Upper lobe of right lung (tissue), 1 donor: ENCODE measurements at regions of chr1 and their contacts with region 1.

Region 1: DNA sequence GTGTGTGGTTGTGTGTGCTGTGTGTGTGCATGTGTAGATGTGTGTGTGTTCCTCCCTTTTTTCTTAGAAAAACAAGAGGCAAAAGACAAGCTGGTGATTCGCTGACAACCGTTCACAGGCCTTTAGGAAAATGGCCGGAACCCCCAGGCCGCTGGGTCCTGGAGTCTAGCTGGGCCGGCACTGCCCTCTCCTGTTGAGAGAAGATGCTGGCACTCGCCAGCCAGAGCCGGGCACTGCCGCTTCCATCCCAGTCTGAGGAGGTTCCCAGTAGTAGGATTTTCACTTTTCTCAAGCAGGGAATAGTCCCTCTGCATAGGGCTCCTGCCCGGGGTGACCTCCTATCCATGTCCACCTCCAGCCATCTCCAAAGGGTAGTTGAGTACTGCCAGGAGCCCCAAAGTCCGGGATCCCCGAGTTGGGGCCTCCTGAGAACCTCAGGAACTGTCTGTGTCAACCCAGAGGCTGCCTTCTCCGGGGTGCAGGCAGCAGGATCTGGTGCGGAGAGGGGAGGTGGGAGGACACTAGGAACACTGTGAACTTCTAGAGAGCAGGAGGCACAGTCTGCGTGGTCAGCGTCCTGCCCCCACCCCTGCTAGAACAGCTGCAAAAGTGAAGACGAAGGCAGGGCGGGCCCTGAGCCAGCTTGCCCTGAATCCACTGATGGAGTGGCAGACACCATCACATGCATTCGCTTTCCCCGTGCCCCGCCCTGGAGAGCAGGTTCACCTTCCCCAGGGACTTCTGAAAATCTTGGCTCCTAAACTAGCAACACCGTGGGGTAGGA is 44.1 kb upstream of the ARHGEF16 start:
- DNase-seq: no peak
- ATAC-seq: peak; percentile 15
- H3K4me3 ChIP-seq: no peak overlapping the region
- H3K27ac ChIP-seq: no peak overlapping the region
- H3K4me1 ChIP-seq: no peaks in the 10 kb centered on the region
- H3K27me3 ChIP-seq: no peaks in the 10 kb centered on the region
- CTCF ChIP-seq: peak; percentile 45

Region 2: DNA sequence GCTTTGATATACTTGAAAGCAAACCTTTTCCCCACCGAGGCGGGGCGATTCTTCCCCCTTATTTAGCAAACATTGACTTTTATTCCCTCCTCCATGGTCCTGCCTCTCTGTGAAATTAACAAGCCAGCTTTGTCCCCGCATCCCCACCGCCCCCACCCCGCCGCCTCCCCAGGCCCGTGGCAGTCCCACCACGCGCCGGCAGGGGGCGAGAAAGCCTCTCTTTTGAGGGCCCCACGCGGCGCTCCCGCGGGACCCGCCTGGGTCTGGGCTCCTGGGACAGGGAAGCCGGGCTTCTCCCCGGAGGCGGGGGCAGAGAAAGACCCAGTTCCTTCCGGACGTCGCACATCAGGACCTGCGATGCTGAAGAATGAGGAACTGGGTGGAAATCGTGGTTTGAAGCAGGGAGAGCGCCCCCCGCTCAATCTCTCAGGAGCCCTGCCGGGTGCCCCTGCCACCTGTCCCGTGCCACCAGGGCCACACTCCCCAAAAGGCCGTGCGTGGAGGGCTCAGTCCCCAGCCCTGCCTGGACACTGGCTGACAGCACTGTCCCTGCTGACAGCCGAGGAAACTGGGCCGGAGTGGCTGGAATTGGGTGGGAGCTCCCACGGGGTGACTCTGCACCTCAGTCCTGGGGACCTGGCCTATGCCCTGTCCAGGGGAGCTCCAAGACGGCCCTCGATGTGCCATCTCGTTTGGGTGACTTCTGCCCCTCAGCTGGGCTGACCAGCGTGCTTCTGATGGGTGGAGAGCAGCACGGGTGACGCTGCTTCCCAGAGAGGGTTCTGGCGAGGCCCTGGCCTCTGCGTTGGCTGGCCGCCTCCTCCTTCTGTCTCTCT is 397.7 kb before region 1 on chr1:
- intact Hi-C with region 1: loop called (anchors 5 kb)
- DNase-seq: peak; percentile 79
- ATAC-seq: peak; percentile 82
- H3K4me3 ChIP-seq: no peak overlapping the region
- H3K27ac ChIP-seq: no peak overlapping the region
- H3K4me1 ChIP-seq: no peaks in the 10 kb centered on the region
- H3K27me3 ChIP-seq: peaks cover 43% of the 10 kb centered on the region
- CTCF ChIP-seq: peak; percentile 80

Region 3: DNA sequence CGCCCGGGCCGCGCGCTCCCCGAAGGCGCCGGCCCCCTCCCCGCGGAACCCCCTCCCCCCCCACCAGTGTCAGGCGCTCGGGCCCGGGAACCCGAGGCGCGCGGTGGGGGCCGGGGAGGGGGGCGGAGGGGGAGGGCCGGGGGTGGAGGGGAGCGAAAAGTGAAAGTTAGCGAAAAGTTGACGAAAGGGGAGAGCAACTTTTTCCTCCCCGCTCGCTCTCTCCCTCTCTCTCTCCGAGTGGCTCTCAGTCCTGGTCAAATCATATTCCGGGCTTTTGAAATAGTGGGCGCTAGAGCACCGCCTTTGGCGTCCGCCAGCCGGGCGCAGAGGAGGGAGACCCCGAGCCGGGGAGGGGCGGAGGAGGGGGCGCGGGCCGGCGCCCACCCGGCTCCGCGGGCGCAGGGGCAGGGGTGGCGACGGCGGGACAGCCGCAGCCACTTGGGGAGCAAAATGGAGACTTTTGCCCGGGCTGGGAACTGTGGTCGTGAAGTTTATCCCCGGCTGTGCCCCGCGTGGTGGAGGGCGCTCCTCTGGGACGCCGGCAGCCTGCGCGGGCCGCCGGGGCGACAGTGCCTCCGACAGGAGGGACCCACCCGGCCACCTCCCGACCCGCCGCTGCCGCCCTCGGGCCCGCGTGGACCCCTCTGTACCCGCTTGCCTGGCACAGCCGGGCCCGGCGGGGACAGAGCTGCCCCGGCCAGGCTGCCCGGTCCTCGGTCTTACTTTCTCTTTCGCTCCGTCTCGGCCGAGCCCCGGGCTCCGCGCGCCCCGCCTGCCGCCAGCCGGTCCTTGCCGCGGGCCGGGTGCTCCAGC is 340.6 kb before region 1 on chr1:
- intact Hi-C with region 1: loop called (anchors 10 kb)
- DNase-seq: peak; percentile 76
- ATAC-seq: peak; percentile 24
- H3K4me3 ChIP-seq: peak overlapping the region; percentile 68
- H3K27ac ChIP-seq: peak overlapping the region; percentile 86
- H3K4me1 ChIP-seq: peaks cover 3% of the 10 kb centered on the region
- H3K27me3 ChIP-seq: peaks cover 82% of the 10 kb centered on the region
- CTCF ChIP-seq: peak; percentile 36

Region 4: DNA sequence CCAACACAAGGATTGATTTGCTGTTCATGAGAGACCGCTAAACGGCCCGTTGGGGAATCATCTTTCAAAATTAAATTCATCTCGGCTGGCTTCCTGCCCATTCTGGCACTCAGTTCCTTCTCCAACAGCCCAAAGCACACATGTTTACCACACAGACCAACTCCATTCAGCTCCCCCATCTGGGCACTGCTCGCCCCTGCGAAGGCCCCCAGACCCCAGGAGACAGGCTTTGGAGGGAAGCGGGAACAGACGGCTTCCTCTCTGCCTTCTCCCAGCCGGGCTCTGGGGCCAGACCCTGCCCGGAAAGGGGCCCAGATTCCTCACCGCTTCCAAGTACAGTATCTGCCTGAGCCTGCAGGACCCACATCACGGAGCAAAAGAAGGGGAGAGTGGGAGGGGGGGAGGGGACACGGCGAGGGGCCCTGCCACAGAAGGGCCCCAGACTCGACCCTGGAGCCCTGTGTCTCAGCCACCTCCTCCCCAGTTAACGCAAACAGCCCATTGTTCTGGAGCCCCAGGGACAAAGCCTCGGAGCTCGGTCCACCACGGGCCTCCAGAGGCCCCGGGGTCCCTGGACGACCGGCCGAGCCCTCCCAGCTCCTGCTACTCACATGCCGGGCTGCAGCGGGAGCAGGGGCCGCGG is 200.3 kb after region 1 on chr1:
- intact Hi-C with region 1: no loop called
- DNase-seq: no peak
- ATAC-seq: no peak
- H3K4me3 ChIP-seq: peak overlapping the region; percentile 54
- H3K27ac ChIP-seq: peak overlapping the region; percentile 17
- H3K4me1 ChIP-seq: peaks cover 31% of the 10 kb centered on the region
- H3K27me3 ChIP-seq: peaks cover 20% of the 10 kb centered on the region
- CTCF ChIP-seq: no peak